Activated CD8-positive, alpha-beta memory T cell treated with anti-CD3 and anti-CD28 coated beads, Interleukin-2, amount 10 ng/mL, durations not matched to agents 7 days and 5 days (primary cell): ENCODE measurements at regions of chr17 and their contacts with region 1.

Region 1: DNA sequence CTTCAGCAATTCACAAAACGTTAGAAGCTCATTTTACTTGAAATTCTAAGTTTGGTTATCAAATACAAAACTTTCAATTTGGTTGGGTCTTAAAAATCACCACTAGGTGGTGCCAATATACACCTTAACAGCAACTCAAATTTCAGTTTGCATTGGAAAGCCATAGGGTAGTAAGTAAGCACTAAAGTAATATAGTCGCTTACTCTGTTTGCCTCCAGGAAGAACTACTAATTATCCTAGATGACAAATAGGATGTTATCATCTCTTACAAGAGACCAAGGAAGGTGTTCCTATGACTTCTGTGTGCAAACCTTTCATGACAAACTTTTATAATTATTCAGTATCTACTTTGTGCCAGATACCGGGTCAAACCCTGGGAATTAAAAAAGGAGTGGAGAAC is 93.3 kb downstream of the MYO1D start:
- DNase-seq: no peak
- ATAC-seq: peak; percentile 47
- H3K4me3 Mint-ChIP-seq: no peak overlapping the region
- H3K27ac Mint-ChIP-seq: no peak overlapping the region
- H3K4me1 Mint-ChIP-seq: peaks cover 2% of the 10 kb centered on the region
- H3K27me3 Mint-ChIP-seq: no peaks in the 10 kb centered on the region

Region 2: GRCh38 chr17:32769839-32770238 is 13.8 kb before region 1 on chr17:
- CTCF ChIA-PET with region 1: interaction called, 11 read pairs
- DNase-seq: no peak
- ATAC-seq: no peak
- H3K4me3 Mint-ChIP-seq: no peak overlapping the region
- H3K27ac Mint-ChIP-seq: no peak overlapping the region
- H3K4me1 Mint-ChIP-seq: peaks cover 3% of the 10 kb centered on the region
- H3K27me3 Mint-ChIP-seq: no peaks in the 10 kb centered on the region

Region 3: DNA sequence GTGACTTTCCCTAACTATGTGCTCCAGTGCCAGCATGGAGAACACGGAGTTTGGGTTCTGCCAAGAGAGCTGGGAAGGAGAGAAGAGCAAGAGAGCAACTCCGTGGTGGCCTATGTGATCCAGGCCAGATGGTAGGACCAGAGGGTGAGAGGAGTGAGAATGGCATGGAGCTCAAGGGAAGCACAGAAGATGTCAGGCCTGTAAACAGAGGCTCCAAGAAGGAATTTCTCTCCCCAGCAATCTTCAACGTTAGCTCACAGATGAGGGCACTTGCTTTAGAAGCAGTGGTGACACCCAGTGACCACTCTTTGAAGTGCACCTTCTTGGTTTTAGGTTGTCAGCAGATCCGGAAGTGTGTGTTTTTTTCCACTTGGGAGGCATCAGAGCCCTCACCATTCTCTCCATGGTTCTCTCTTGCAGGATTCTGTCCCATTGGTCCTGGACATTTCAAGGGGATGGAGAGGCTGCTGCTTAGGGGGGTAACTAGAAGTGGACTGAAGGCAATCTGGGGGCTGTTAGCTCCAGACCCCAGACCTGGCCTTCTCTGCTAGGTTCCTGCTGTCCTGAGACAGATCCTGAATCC is 126.3 kb after region 1 on chr17:
- CTCF ChIA-PET with region 1: interaction called, 40 read pairs
- DNase-seq: peak; percentile 87
- ATAC-seq: peak; percentile 84
- H3K4me3 Mint-ChIP-seq: no peak overlapping the region
- H3K27ac Mint-ChIP-seq: peak overlapping the region; percentile 26
- H3K4me1 Mint-ChIP-seq: peaks cover 37% of the 10 kb centered on the region
- H3K27me3 Mint-ChIP-seq: peaks cover 7% of the 10 kb centered on the region